ENCODE measurements at regions of chr12 and their contacts with region 1.

Region 1: DNA sequence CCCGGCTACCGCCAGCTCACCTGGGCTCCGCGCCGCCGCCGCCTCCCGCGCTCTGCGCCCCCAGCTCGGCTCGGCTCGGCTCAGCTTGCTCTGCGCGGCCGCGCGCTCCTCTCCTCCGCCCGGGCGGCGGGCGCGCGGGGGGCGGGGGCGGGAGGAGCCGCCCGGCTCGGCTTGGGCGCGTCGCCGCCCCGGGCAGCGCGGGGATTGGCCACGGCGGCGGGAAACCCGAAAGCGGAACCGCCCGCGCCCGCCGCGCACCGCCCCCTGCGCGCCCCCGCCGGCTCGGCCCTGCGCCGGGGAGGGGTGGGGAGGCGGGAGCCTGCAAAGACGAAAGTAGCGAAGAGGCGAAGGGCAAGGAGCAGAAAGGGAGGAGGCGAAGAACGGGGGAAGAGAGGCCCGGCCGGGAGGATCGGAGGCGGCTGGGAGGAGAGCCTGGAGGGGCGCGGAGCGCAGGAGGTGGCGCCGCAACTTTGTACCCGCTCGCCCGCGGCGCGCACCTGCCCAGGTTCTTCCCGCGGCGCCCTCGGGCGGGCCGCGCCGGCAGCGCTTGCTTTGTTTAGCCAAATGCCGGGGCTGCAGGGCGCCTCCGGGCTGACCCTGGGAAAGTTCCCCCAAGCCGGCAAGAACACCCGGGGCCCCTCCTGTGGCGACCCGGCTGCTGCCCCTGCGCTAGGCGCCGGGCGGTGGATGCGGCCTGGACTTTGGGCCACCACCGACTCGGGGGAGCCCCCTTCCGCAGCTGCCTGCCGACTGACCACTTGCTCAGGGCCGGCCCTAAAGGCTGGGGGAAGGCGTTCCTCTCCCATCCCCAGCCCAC is at the start of gene CAMKK2:
- H3K4me3 ChIP-seq: peak within 1 kb of the TSS; percentile 96
- H3K27ac ChIP-seq: peak within 1 kb of the TSS; percentile 92
- H3K4me1 ChIP-seq: no peaks in the 10 kb centered on the region
- CTCF ChIP-seq: peak; percentile 69

Region 2: GRCh38 chr12:121351820-121352681 is 55.2 kb after region 1 on chr12 and contains the start of gene ANAPC5:
- CTCF ChIA-PET with region 1: no interaction called
- POLR2A ChIA-PET with region 1: interaction called, 11 read pairs
- H3K4me3 ChIP-seq: peak within 1 kb of the TSS; percentile 93
- H3K27ac ChIP-seq: peak within 1 kb of the TSS; percentile 72
- H3K4me1 ChIP-seq: no peaks in the 10 kb centered on the region
- CTCF ChIP-seq: peak; percentile 62; the same call in 1 of the 2 replicates

Measured in HEK293 (cell line).